Breast epithelium (tissue), 4 donors: ENCODE measurements at regions of chr12 and their contacts with region 1.

Region 1: DNA sequence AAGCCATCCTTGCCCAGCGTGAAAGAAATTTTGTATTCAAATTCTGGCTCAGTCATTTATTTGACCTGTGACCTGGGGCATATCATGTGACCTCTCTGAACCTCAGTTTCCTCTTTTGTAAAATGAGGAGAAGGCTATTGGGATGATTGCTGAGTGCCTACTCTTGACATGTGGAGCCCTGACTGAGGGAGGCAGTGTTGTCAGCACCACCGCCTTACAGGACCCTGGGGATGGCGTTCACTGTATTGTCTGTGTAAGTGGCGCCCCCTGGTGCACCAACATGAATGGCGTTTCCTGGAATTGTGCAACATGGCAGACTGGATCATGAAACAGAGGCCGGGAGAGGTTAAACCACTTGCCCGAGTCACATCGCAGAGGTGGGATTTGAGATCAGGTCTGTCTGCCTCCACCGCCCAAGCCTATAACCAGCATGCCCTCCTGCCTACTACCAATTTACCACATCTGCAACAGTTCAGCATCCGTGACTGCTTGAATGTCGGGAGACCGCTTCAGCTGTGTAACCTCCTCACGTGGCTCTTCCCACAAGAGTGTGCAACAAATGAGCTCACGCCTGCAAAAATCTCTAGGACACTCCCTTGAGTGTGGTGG is 20.1 kb upstream of the CCDC63 start:
- DNase-seq: peak; percentile 72 to 78
- H3K4me3 ChIP-seq: peak overlapping the region in 2 of 3 donors; percentile 11 to 54
- H3K27ac ChIP-seq: no peak overlapping the region
- H3K4me1 ChIP-seq: no peaks in the 10 kb centered on the region
- H3K27me3 ChIP-seq: no peaks in the 10 kb centered on the region
- CTCF ChIP-seq: peak; percentile 34 to 75 (median 66)
- POLR2A ChIP-seq: no peak

Region 2: GRCh38 chr12:110117956-110118685 is 708.6 kb before region 1 on chr12:
- intact Hi-C with region 1: loop called (anchors 5 kb)
- DNase-seq: no peak
- H3K4me3 ChIP-seq: no peak overlapping the region
- H3K27ac ChIP-seq: peak overlapping the region; percentile 43 to 57
- H3K4me1 ChIP-seq: no peaks in the 10 kb centered on the region
- H3K27me3 ChIP-seq: no peaks in the 10 kb centered on the region
- CTCF ChIP-seq: no peak
- POLR2A ChIP-seq: no peak